Heart right ventricle (tissue), 16 donors: ENCODE measurements at regions of chr14 and their contacts with region 1.

Region 1: GRCh38 chr14:105622322-105622955 is 96.1 kb downstream of the TMEM121 start:
- DNase-seq: no peak
- ATAC-seq: peak in 5 of 8 donors; percentile 16 to 45 (median 44)
- H3K4me3 ChIP-seq: no peak overlapping the region
- H3K27ac ChIP-seq: no peak overlapping the region
- H3K4me1 ChIP-seq: peaks cover 0 to 4% (median 0%) of the 10 kb centered on the region in 9 donors
- H3K27me3 ChIP-seq: peaks cover 0 to 4% (median 0%) of the 10 kb centered on the region in 7 donors
- CTCF ChIP-seq: no peak

Region 2: GRCh38 chr14:105666420-105666819 is 44.0 kb after region 1 on chr14:
- intact Hi-C with region 1: loop called in 1 of 10 experiments (anchors 5 kb)
- DNase-seq: no peak
- ATAC-seq: peak in 2 of 8 donors; percentile 28 to 76
- H3K4me3 ChIP-seq: no peak overlapping the region
- H3K27ac ChIP-seq: no peak overlapping the region
- H3K4me1 ChIP-seq: peaks cover 0 to 9% (median 0%) of the 10 kb centered on the region in 9 donors
- H3K27me3 ChIP-seq: peaks cover 0 to 8% (median 0%) of the 10 kb centered on the region in 7 donors
- CTCF ChIP-seq: no peak